Natural killer cell (primary cell): ENCODE measurements at regions of chr7 and their contacts with region 1.

Region 1: GRCh38 chr7:55572378-55573233 is at the start of gene VOPP1:
- DNase-seq: peak; percentile 61 to 87
- ATAC-seq: peak; percentile 47 to 71 (median 56)
- H3K4me3 ChIP-seq: peak within 1 kb of the TSS; percentile 79
- H3K4me3 Mint-ChIP-seq: peak within 1 kb of the TSS; percentile 93
- H3K27ac ChIP-seq: peak within 1 kb of the TSS; percentile 91
- H3K27ac Mint-ChIP-seq: peak within 1 kb of the TSS; percentile 87 to 96
- H3K4me1 ChIP-seq: peaks cover 57% of the 10 kb centered on the region
- H3K4me1 Mint-ChIP-seq: peaks cover 56 to 58% of the 10 kb centered on the region in 2 donors
- H3K27me3 ChIP-seq: no peaks in the 10 kb centered on the region
- H3K27me3 Mint-ChIP-seq: peaks cover 0 to 5% of the 10 kb centered on the region in 2 donors
- CTCF ChIP-seq: no peak
- total RNA-seq, gene VOPP1: 79.3 to 115 (median 110) TPM

Region 2: DNA sequence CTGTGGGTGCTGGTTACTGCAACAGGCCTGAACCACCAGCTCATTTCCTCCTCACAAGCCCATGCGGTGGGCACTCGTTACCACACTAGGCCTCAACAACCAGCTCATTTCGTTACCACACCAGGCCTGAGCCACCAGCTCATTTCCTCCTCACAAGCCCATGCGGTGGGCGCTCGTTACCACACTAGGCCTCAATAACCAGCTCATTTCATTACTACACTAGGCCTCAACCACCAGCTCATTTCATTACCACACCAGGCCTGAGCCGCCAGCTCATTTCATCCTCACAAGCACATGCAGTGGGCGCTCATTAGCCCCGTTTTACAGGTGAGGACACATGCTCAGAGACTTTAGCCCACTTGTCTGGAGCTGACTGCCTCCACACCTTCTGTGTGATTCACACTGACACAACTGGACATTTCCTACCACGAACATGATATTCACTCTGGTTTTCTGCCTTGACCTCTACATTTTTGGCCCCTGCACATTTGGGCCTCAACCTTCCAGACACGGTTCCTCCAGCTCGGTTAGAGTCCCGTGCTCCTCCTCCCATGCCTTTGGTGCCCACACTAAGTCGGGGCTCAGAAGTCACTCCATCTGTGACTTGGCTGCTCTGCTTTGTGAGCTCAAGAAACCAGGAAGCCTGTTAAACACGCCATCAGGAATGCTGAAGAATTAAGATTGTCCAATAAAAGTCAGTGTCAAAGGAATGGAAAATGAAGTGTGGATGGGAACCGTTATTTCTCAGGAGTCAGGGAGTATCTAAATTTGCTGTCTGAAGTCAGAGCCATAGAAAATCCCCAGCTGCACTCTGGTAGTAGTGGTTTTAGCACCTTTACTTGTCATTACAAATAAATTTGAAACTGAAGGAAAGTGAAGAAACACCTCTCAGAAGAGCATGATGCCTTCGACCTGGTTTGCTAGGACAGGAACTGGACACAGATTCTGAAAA is 263.3 kb before region 1 on chr7:
- intact Hi-C with region 1: loop called (anchors 2 kb)
- DNase-seq: peak; percentile 71 to 87
- ATAC-seq: peak; percentile 78 to 89 (median 87)
- H3K4me3 ChIP-seq: no peak overlapping the region
- H3K4me3 Mint-ChIP-seq: peak overlapping the region; percentile 65
- H3K27ac ChIP-seq: peak overlapping the region; percentile 75
- H3K27ac Mint-ChIP-seq: peak overlapping the region; percentile 90 to 94
- H3K4me1 ChIP-seq: peaks cover 45% of the 10 kb centered on the region
- H3K4me1 Mint-ChIP-seq: peaks cover 49% of the 10 kb centered on the region in 2 donors
- H3K27me3 ChIP-seq: peaks cover 20% of the 10 kb centered on the region
- H3K27me3 Mint-ChIP-seq: peaks cover 47 to 55% of the 10 kb centered on the region in 2 donors
- CTCF ChIP-seq: no peak

Region 3: DNA sequence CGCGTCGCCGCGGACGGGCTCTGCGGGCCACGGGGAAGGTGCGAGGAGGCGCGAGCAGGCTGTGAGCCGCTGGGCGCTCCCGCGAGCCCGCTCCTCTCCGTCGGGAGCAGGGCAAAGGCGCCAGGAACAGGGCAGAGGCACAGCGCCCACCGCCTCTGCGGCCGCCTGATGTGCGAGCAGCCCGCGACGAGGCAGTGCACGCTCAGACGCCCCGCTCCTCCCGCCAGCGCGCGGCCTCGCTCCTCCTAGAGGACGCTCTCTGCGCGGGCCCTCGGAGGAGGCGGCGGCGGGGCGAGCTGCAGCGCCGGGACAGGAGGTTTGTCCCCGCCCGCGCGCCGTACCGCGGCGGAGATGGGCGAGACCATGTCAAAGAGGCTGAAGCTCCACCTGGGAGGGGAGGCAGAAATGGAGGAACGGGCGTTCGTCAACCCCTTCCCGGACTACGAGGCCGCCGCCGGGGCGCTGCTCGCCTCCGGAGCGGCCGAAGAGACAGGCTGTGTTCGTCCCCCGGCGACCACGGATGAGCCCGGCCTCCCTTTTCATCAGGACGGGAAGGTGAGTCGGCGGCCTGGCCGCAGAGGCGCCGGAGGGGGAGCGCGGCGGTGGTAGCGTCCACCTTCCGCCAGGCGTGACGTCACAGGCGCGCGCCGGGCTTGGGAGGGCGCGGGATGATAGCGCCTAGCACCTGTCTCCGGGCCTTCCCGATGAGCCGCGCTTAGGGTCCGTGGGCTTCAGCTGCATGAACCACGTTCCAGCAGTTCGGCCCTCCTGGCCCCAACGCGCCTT is 206.7 kb before region 1 on chr7:
- intact Hi-C with region 1: loop called (anchors 2 kb)
- DNase-seq: peak; percentile 97 to 98
- ATAC-seq: peak; percentile 85 to 97 (median 88)
- H3K4me3 ChIP-seq: peak overlapping the region; percentile 89
- H3K4me3 Mint-ChIP-seq: peak overlapping the region; percentile 96
- H3K27ac ChIP-seq: peak overlapping the region; percentile 98
- H3K27ac Mint-ChIP-seq: peak overlapping the region; percentile 97 to 100
- H3K4me1 ChIP-seq: peaks cover 13% of the 10 kb centered on the region
- H3K4me1 Mint-ChIP-seq: peaks cover 20 to 32% of the 10 kb centered on the region in 2 donors
- H3K27me3 ChIP-seq: no peaks in the 10 kb centered on the region
- H3K27me3 Mint-ChIP-seq: peaks cover 9 to 11% of the 10 kb centered on the region in 2 donors
- CTCF ChIP-seq: peak; percentile 37

Region 4: DNA sequence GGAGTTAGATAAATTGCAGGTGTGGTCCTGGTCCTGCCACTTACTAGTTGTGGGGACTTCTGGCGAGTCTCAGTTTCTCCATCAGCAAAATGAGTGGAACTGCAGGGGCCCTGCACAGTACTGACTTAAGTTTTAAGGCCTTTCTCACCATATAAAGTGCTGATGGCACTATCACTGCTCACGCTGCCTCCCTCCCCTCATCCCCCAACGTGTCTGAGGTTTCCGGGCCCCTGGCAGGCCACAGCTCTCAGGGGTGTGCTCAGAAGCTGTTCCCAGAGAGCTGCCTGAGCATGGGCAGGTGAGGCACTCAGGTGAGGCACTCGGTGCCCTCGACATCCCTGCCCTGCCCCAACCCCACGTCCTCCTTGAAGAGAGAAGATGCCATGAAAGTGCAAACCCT is 74.5 kb before region 1 on chr7:
- intact Hi-C with region 1: loop called (anchors 1 kb)
- DNase-seq: peak; percentile 37 to 66
- ATAC-seq: peak; percentile 85 to 98 (median 96)
- H3K4me3 ChIP-seq: no peak overlapping the region
- H3K4me3 Mint-ChIP-seq: peak overlapping the region; percentile 86
- H3K27ac ChIP-seq: peak overlapping the region; percentile 3
- H3K27ac Mint-ChIP-seq: peak overlapping the region; percentile 75 to 83
- H3K4me1 ChIP-seq: peaks cover 29% of the 10 kb centered on the region
- H3K4me1 Mint-ChIP-seq: peaks cover 76 to 77% of the 10 kb centered on the region in 2 donors
- H3K27me3 ChIP-seq: no peaks in the 10 kb centered on the region
- H3K27me3 Mint-ChIP-seq: no peaks in the 10 kb centered on the region
- CTCF ChIP-seq: no peak

Region 5: DNA sequence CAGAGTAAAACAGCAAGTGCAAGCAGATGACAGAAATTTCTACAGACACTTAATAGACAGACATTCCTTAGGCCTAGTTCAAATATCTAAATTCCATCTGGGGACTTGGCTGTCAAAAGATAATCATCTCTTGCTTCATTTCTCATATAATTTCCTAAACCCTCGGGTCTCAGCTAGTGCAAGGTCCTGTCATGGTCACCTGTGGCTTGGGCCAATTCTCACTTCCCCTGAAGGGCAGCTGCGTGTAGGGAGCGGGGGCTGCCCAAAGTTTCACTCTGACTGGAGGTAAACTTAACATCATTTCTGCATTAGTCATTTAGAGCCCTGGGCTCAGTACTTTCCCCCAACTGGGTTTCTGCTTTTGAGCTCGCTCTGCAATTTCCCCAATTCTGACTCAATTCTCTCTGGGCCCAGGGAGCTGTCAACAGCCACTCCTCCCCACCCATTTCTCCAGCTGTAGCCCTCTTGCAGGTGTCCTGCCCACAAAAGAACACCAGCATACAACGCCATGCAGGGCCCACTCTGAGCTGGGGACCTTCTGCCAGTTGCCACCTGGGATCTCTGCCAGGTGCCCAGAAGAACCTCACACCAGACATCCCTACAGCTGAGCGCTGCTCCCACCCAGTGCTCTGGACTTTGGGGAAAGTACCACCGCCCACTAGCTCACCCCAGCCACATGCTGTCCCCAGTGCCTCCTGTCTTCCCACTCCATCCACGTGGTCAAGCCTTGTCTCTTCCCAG is 38.3 kb before region 1 on chr7:
- intact Hi-C with region 1: loop called (anchors 1 kb)
- DNase-seq: peak; percentile 49 to 71
- ATAC-seq: peak; percentile 46 to 74 (median 67)
- H3K4me3 ChIP-seq: no peak overlapping the region
- H3K4me3 Mint-ChIP-seq: peak overlapping the region; percentile 80
- H3K27ac ChIP-seq: peak overlapping the region; percentile 89
- H3K27ac Mint-ChIP-seq: peak overlapping the region; percentile 89 to 90
- H3K4me1 ChIP-seq: peaks cover 65% of the 10 kb centered on the region
- H3K4me1 Mint-ChIP-seq: peaks cover 88 to 91% of the 10 kb centered on the region in 2 donors
- H3K27me3 ChIP-seq: no peaks in the 10 kb centered on the region
- H3K27me3 Mint-ChIP-seq: no peaks in the 10 kb centered on the region
- CTCF ChIP-seq: no peak

Region 6: DNA sequence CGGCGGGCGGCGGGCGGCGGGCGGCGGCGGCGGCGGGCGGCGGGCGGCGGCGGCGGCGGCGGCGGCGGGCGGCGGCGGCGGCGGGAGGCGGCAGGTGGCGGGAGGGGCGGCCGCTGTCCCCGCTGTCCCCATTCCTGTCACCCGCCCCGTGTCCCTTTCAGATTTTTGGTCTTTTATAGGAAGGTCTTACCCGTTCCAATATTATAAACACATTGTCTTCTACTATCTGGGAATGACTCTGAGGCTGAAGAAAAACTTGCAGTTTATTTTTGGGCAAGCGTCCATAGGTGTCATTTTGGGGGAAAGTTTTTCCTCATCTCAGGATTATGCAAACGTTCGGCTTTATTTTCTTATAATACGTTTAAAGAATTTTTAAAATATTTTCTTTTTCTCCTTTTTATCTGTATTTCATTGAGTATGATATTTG is 315.2 kb after region 1 on chr7:
- intact Hi-C with region 1: loop called (anchors 5 kb)
- DNase-seq: peak in 1 of 2 donors; percentile 37
- ATAC-seq: no peak
- H3K4me3 ChIP-seq: peak overlapping the region; percentile 35
- H3K4me3 Mint-ChIP-seq: peak overlapping the region; percentile 89
- H3K27ac ChIP-seq: no peak overlapping the region
- H3K27ac Mint-ChIP-seq: peak overlapping the region; percentile 95 to 97
- H3K4me1 ChIP-seq: peaks cover 5% of the 10 kb centered on the region
- H3K4me1 Mint-ChIP-seq: peaks cover 4 to 10% of the 10 kb centered on the region in 2 donors
- H3K27me3 ChIP-seq: no peaks in the 10 kb centered on the region
- H3K27me3 Mint-ChIP-seq: peaks cover 0 to 4% of the 10 kb centered on the region in 2 donors
- CTCF ChIP-seq: no peak

Region 7: GRCh38 chr7:56051339-56052191 is 479.0 kb after region 1 on chr7 and contains the starts of genes CCT6A and PSPH:
- intact Hi-C with region 1: loop called (anchors 10 kb)
- DNase-seq: peak; percentile 86 to 94
- ATAC-seq: peak; percentile 94 to 98 (median 96)
- H3K4me3 ChIP-seq: peak within 1 kb of the TSS; percentile 74
- H3K4me3 Mint-ChIP-seq: peak within 1 kb of the TSS; percentile 88
- H3K27ac ChIP-seq: peak within 1 kb of the TSS; percentile 71
- H3K27ac Mint-ChIP-seq: peak within 1 kb of the TSS; percentile 83 to 93
- H3K4me1 ChIP-seq: peaks cover 27% of the 10 kb centered on the region
- H3K4me1 Mint-ChIP-seq: peaks cover 4 to 18% of the 10 kb centered on the region in 2 donors
- H3K27me3 ChIP-seq: no peaks in the 10 kb centered on the region
- H3K27me3 Mint-ChIP-seq: no peaks in the 10 kb centered on the region
- CTCF ChIP-seq: no peak
- total RNA-seq, gene CCT6A: 48.1 to 65.3 (median 48.3) TPM
- total RNA-seq, gene PSPH: 2.8 to 4.1 (median 3.8) TPM